Dorsolateral prefrontal cortex (tissue), 120 donors: ENCODE measurements at regions of chr21 and their contacts with region 1.

Region 1: GRCh38 chr21:42220138-42220701 is 1.3 kb downstream of the ABCG1 start:
- DNase-seq: peak in 8 of 10 donors; percentile 53 to 79 (median 66)
- H3K4me3 ChIP-seq: peak overlapping the region; percentile 63 to 95 (median 85)
- H3K27ac ChIP-seq: peak overlapping the region; percentile 41 to 95 (median 89)
- H3K27me3 ChIP-seq: no peaks in the 10 kb centered on the region
- CTCF ChIP-seq: peak in 5 of 56 donors; percentile 11 to 37 (median 12)

Region 2: GRCh38 chr21:42171091-42172053 is 48.8 kb before region 1 on chr21:
- intact Hi-C with region 1: loop called (anchors 2 to 5 kb)
- DNase-seq: peak in 6 of 10 donors; percentile 61 to 93 (median 76)
- H3K4me3 ChIP-seq: peak overlapping the region in 9 of 59 donors; percentile 2 to 37 (median 15)
- H3K27ac ChIP-seq: peak overlapping the region; percentile 7 to 98 (median 91)
- H3K27me3 ChIP-seq: no peaks in the 10 kb centered on the region
- CTCF ChIP-seq: peak in 3 of 56 donors; percentile 4 to 11 (median 7)

Region 3: DNA sequence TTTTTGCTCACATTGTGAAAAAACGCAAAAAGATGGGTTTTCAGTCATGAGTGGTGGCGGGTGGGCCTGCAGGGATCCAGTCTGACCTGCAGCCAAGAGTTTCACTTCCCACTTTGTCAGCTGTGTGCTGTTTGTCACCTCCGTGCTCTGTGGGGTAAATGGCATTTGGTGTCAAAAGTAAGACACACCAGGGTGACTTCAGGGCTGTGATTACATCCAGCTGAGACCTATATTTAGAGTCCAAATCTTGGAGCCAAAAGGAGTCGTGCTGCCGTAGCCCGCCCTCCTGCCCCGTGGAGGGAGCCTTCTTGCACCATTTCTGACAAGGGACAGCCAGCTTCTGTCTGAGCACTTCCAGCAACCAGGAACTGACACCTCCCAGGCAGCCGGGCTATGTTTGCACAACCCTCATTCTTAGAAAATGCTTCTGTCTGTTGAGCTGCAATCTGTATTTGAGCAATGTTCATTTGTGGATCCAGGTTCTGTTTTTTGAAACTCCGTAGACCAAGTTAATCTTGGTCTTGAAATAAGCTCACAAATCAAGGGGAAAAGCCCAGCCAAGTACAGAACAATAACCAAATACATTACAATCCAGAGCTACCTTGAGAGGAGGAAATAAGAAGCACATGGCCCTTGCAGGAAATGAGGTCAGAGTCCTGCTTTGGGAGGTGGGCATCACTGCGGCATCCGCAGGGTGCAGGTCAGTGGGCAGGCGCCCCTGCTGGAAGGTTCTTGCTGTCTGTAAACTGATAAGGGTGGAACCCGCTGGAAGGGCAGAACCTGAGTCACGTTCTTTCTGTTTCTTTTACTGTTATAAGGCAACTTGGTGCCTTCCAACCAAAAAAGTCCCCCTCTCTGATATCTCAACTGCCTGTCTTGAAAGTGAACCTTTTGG is 13.1 kb after region 1 on chr21:
- intact Hi-C with region 1: loop called in 1 of 2 experiments (anchors 2 kb)
- DNase-seq: peak in 3 of 10 donors; percentile 46 to 59 (median 54)
- H3K4me3 ChIP-seq: peak overlapping the region in 18 of 59 donors; percentile 0 to 91 (median 67)
- H3K27ac ChIP-seq: peak overlapping the region; percentile 7 to 92 (median 87)
- H3K27me3 ChIP-seq: no peaks in the 10 kb centered on the region
- CTCF ChIP-seq: peak in 2 of 56 donors; percentile 14 to 18

Region 4: GRCh38 chr21:42258153-42258884 is 38.1 kb after region 1 on chr21:
- intact Hi-C with region 1: loop called (anchors 2 kb)
- DNase-seq: peak; percentile 52 to 87 (median 83)
- H3K4me3 ChIP-seq: peak overlapping the region in 1 of 59 donors; percentile 18
- H3K27ac ChIP-seq: peak overlapping the region in 50 of 59 donors; percentile 1 to 91 (median 68)
- H3K27me3 ChIP-seq: no peaks in the 10 kb centered on the region
- CTCF ChIP-seq: peak; percentile 43 to 94 (median 87)

Region 5: GRCh38 chr21:42366321-42367009 is 146.2 kb after region 1 on chr21 and contains the start of gene TFF1:
- intact Hi-C with region 1: no loop called
- DNase-seq: no peak
- H3K4me3 ChIP-seq: no peak within 1 kb of the TSS
- H3K27ac ChIP-seq: no peak within 1 kb of the TSS
- H3K27me3 ChIP-seq: peaks cover 0 to 23% (median 2%) of the 10 kb centered on the region in 45 donors
- CTCF ChIP-seq: no peak
- total RNA-seq, gene TFF1: not detected